Thyroid gland (tissue), 4 donors: ENCODE measurements at regions of chr15 and their contacts with region 1.

Region 1: GRCh38 chr15:44663409-44664308 is at the start of gene SPG11:
- DNase-seq: peak; percentile 99
- H3K4me3 ChIP-seq: peak within 1 kb of the TSS; percentile 27 to 93 (median 57)
- H3K27ac ChIP-seq: peak within 1 kb of the TSS; percentile 93 to 99 (median 99)
- H3K4me1 ChIP-seq: peaks cover 14 to 17% of the 10 kb centered on the region in 2 donors
- H3K27me3 ChIP-seq: no peaks in the 10 kb centered on the region
- CTCF ChIP-seq: peak; percentile 75 to 99 (median 96)
- POLR2A ChIP-seq: peak; percentile 81 to 93
- total RNA-seq, gene SPG11: 123 to 182 (median 168) TPM

Region 2: GRCh38 chr15:44584162-44584749 is 79.4 kb before region 1 on chr15:
- intact Hi-C with region 1: loop called (anchors 10 kb)
- DNase-seq: peak; percentile 75 to 77
- H3K4me3 ChIP-seq: no peak overlapping the region
- H3K27ac ChIP-seq: peak overlapping the region in 1 of 3 donors; percentile 21
- H3K4me1 ChIP-seq: no peaks in the 10 kb centered on the region
- H3K27me3 ChIP-seq: no peaks in the 10 kb centered on the region
- CTCF ChIP-seq: peak in 5 of 6 experiments; percentile 15 to 52 (median 40)
- POLR2A ChIP-seq: no peak

Region 3: GRCh38 chr15:44598892-44599291 is 64.8 kb before region 1 on chr15:
- intact Hi-C with region 1: no loop called
- DNase-seq: no peak
- H3K4me3 ChIP-seq: no peak overlapping the region
- H3K27ac ChIP-seq: peak overlapping the region; percentile 94 to 97 (median 96)
- H3K4me1 ChIP-seq: peaks cover 36 to 49% of the 10 kb centered on the region in 2 donors
- H3K27me3 ChIP-seq: no peaks in the 10 kb centered on the region
- CTCF ChIP-seq: no peak
- POLR2A ChIP-seq: no peak

Region 4: DNA sequence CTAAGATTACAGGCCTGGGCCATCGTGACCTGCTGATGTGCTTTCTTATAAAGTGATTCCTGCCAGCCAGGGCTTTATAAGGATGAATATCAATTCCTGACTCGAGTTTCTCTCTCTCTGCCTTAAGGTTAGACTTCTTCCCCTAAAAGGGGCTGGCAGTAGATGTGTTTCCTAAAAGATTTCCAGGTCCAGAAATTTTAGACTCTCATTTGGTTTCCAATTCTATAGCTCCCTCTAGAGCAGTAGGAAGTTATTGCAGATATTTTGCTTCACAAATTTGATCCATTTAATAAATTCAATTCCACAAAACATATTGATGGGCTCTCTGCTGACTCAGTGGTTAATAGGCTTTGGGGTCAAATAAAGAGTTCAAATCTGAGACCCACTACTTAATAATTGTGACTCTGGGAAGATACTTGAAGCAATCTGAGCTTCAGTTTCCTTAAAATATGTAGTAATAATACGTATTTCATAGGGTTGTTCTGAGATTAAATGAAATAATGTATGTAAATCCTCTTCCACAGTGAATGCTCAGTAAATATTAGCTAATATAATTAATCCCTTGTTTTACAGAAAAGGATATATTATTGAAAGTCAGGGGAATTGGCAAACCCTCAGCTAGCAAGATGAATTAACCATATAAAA is 74.8 kb after region 1 on chr15:
- intact Hi-C with region 1: loop called (anchors 5 kb)
- DNase-seq: no peak
- H3K4me3 ChIP-seq: no peak overlapping the region
- H3K27ac ChIP-seq: no peak overlapping the region
- H3K4me1 ChIP-seq: no peaks in the 10 kb centered on the region
- H3K27me3 ChIP-seq: no peaks in the 10 kb centered on the region
- CTCF ChIP-seq: peak; percentile 30 to 91 (median 64)
- POLR2A ChIP-seq: no peak

Region 5: DNA sequence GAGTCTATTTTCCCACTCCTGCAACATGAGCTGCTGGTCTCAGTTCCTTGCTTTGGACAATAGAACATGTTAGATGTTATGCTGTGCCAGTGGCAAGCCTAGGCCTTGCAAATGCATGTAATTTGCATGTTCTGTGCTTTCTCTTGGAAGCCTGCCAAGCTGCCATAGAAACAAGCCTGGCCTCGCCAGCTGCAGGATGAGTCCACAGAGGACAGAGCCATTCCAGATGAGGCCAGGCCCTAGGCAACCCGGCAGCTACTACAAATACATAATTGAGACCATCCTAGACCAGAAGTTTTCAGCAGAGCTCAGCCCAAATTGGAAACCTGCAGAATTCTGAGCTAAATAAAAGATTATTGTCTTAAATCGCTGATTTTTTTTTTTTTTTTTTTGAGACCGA is 112.3 kb after region 1 on chr15:
- intact Hi-C with region 1: no loop called
- DNase-seq: no peak
- H3K4me3 ChIP-seq: no peak overlapping the region
- H3K27ac ChIP-seq: no peak overlapping the region
- H3K4me1 ChIP-seq: no peaks in the 10 kb centered on the region
- H3K27me3 ChIP-seq: no peaks in the 10 kb centered on the region
- CTCF ChIP-seq: no peak
- POLR2A ChIP-seq: no peak

Region 6: GRCh38 chr15:44861439-44861910 is 197.8 kb after region 1 on chr15:
- intact Hi-C with region 1: no loop called
- DNase-seq: no peak
- H3K4me3 ChIP-seq: no peak overlapping the region
- H3K27ac ChIP-seq: peak overlapping the region in 1 of 3 donors; percentile 79
- H3K4me1 ChIP-seq: peaks cover 6 to 8% of the 10 kb centered on the region in 2 donors
- H3K27me3 ChIP-seq: no peaks in the 10 kb centered on the region
- CTCF ChIP-seq: no peak
- POLR2A ChIP-seq: no peak